Transverse colon (tissue), 4 donors: ENCODE measurements at regions of chr11 and their contacts with region 1.

Region 1: DNA sequence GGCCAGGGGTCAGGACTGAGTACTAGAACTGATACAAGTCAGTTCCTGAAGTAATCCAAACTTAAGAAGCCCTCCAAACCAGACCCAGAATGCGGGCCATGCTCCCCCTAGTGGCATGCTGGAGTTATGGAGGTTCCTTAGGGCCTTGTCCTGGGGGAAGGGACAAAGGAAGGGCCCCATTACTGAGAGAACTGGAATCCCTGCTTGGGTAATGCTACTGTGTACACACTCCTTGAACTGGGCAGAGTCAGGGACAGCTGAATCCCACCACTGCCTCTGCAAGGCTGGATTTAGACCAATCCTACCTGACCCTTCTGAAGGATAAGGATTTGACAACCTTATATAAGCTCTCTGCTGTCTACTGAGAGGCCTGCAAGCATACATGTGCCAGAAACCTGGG is 97.3 kb upstream of the AKIP1 start:
- DNase-seq: peak; percentile 80
- H3K4me3 ChIP-seq: no peak overlapping the region
- H3K27ac ChIP-seq: peak overlapping the region; percentile 63 to 91 (median 90)
- H3K4me1 ChIP-seq: peaks cover 10 to 48% (median 30%) of the 10 kb centered on the region in 4 donors
- H3K27me3 ChIP-seq: no peaks in the 10 kb centered on the region
- CTCF ChIP-seq: peak; percentile 82 to 94 (median 84)
- EP300 ChIP-seq: no peak
- POLR2A ChIP-seq: no peak

Region 2: GRCh38 chr11:8688414-8689362 is 125.0 kb before region 1 on chr11:
- in situ Hi-C with region 1: loop called in 2 of 4 experiments (anchors 10 kb)
- intact Hi-C with region 1: no loop called
- DNase-seq: peak; percentile 96
- H3K4me3 ChIP-seq: peak overlapping the region; percentile 44 to 61 (median 50)
- H3K27ac ChIP-seq: peak overlapping the region; percentile 84 to 95 (median 92)
- H3K4me1 ChIP-seq: peaks cover 13 to 47% (median 25%) of the 10 kb centered on the region in 4 donors
- H3K27me3 ChIP-seq: no peaks in the 10 kb centered on the region
- CTCF ChIP-seq: peak in 2 of 5 experiments; percentile 10 to 29
- EP300 ChIP-seq: no peak
- POLR2A ChIP-seq: peak; percentile 92

Region 3: DNA sequence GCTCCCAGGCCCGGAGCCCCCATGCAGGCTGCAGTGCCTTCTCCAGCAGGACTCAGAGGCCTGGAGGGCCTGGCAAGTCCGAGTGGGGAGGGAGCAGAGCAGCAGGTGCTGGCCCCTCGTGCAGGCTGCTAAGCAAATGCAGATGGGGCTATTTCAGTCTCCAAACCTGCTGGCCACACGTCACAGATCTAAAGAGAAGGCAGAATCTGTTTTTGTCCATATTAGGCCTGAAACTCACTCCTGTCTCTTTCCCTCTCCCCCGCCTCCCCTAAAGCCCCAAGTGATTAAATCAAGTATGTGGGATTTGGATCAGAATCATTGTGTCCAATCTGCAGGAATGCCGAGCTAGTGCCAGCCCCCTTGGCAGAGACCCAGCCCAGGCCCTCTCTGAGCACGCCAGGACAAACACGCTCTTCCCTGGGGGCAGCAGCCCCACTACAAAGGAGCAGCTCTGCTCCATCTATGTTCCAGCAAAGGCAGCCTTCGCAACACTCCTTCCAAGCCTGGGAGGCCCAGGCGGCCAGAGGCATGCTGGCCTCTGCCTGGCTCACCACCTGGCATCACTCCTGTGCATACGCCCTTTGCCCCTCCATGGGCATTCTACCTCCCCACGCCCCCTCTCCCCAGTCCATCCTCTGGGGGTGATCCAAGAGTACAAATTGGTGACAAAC is 104.5 kb before region 1 on chr11:
- in situ Hi-C with region 1: no loop called
- intact Hi-C with region 1: loop called (anchors 5 kb)
- DNase-seq: peak; percentile 78
- H3K4me3 ChIP-seq: no peak overlapping the region
- H3K27ac ChIP-seq: peak overlapping the region; percentile 87 to 93 (median 89)
- H3K4me1 ChIP-seq: peaks cover 5 to 24% (median 16%) of the 10 kb centered on the region in 4 donors
- H3K27me3 ChIP-seq: no peaks in the 10 kb centered on the region
- CTCF ChIP-seq: no peak
- EP300 ChIP-seq: peak; percentile 87
- POLR2A ChIP-seq: no peak

Region 4: GRCh38 chr11:9015677-9016076 is 202.0 kb after region 1 on chr11:
- in situ Hi-C with region 1: no loop called
- intact Hi-C with region 1: no loop called
- DNase-seq: peak; percentile 66
- H3K4me3 ChIP-seq: no peak overlapping the region
- H3K27ac ChIP-seq: no peak overlapping the region
- H3K4me1 ChIP-seq: peaks cover 0 to 8% (median 0%) of the 10 kb centered on the region in 4 donors
- H3K27me3 ChIP-seq: no peaks in the 10 kb centered on the region
- CTCF ChIP-seq: peak; percentile 73 to 81 (median 78)
- EP300 ChIP-seq: no peak
- POLR2A ChIP-seq: no peak